ENCODE measurements at regions of chr21 and their contacts with region 1.

Region 1: GRCh38 chr21:34603002-34603709 is 11.8 kb downstream of the RCAN1 start:
- DNase-seq: peak; percentile 85
- ATAC-seq: peak; percentile 96 to 98

Region 2: GRCh38 chr21:34510148-34511142 is 92.7 kb before region 1 on chr21:
- intact Hi-C with region 1: loop called in 1 of 2 experiments (anchors 1 kb)
- DNase-seq: peak; percentile 86
- ATAC-seq: peak; percentile 89 to 92

Region 3: GRCh38 chr21:34526618-34527290 is 76.4 kb before region 1 on chr21:
- intact Hi-C with region 1: loop called in 1 of 2 experiments (anchors 5 kb)
- DNase-seq: peak; percentile 84
- ATAC-seq: peak; percentile 86 to 94